SK-N-SH (cell line): ENCODE measurements at regions of chr4 and their contacts with region 1.

Region 1: GRCh38 chr4:139099366-139099982 is 77.5 kb downstream of the ELF2 start:
- DNase-seq: peak; percentile 76
- H3K4me3 ChIP-seq: no peak overlapping the region; a peak in 1 of 4 replicates
- H3K27ac ChIP-seq: no peak overlapping the region
- H3K4me1 ChIP-seq: peaks cover 0 to 2% of the 10 kb centered on the region in 2 experiments; a peak in 1 of 4 replicates
- H3K27me3 ChIP-seq: no peaks in the 10 kb centered on the region
- CTCF ChIP-seq: peak; percentile 89
- EP300 ChIP-seq: no peak
- RAD21 ChIP-seq: peak; percentile 93

Region 2: GRCh38 chr4:138475116-138475515 is 624.4 kb before region 1 on chr4:
- CTCF ChIA-PET with region 1: no interaction called
- POLR2A ChIA-PET with region 1: no interaction called
- DNase-seq: no peak
- H3K4me3 ChIP-seq: no peak overlapping the region
- H3K27ac ChIP-seq: no peak overlapping the region
- H3K4me1 ChIP-seq: no peaks in the 10 kb centered on the region
- H3K27me3 ChIP-seq: no peaks in the 10 kb centered on the region
- CTCF ChIP-seq: no peak
- EP300 ChIP-seq: no peak
- RAD21 ChIP-seq: no peak

Region 3: DNA sequence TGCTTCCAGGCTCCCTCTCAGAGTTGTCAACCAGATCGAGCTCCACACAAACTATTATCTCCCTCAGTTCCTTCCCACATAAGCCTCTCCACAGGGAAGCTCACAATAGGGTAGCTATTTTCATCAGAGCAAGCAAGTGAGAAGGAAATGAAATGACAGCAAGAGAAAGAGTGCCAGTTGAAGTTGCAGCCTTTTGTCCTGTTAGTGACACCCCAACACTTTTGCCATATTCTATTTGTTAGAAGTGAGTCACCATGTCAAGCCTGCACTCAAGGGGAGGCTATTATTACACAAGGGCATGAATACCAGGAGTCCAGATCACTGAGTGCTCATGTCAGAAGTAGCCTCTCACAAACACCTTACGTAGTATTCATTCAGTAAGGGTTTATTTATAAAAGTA is 350.2 kb before region 1 on chr4:
- CTCF ChIA-PET with region 1: no interaction called
- POLR2A ChIA-PET with region 1: no interaction called
- DNase-seq: no peak
- H3K4me3 ChIP-seq: no peak overlapping the region
- H3K27ac ChIP-seq: no peak overlapping the region
- H3K4me1 ChIP-seq: no peaks in the 10 kb centered on the region
- H3K27me3 ChIP-seq: no peaks in the 10 kb centered on the region
- CTCF ChIP-seq: no peak
- EP300 ChIP-seq: no peak
- RAD21 ChIP-seq: no peak

Region 4: GRCh38 chr4:139015269-139015947 is 84.1 kb before region 1 on chr4 and contains the start of gene NOCT:
- CTCF ChIA-PET with region 1: no interaction called
- POLR2A ChIA-PET with region 1: no interaction called
- DNase-seq: peak; percentile 91
- H3K4me3 ChIP-seq: peak within 1 kb of the TSS; percentile 73 to 85
- H3K27ac ChIP-seq: peak within 1 kb of the TSS; percentile 90 to 99
- H3K4me1 ChIP-seq: peaks cover 30 to 33% of the 10 kb centered on the region in 2 experiments
- H3K27me3 ChIP-seq: no peaks in the 10 kb centered on the region
- CTCF ChIP-seq: no peak
- EP300 ChIP-seq: peak in 1 of 2 experiments; percentile 60; a peak in 2 of 4 replicates
- RAD21 ChIP-seq: no peak
- polyA plus RNA-seq, gene NOCT: 3.8 TPM in 2 replicates

Region 5: DNA sequence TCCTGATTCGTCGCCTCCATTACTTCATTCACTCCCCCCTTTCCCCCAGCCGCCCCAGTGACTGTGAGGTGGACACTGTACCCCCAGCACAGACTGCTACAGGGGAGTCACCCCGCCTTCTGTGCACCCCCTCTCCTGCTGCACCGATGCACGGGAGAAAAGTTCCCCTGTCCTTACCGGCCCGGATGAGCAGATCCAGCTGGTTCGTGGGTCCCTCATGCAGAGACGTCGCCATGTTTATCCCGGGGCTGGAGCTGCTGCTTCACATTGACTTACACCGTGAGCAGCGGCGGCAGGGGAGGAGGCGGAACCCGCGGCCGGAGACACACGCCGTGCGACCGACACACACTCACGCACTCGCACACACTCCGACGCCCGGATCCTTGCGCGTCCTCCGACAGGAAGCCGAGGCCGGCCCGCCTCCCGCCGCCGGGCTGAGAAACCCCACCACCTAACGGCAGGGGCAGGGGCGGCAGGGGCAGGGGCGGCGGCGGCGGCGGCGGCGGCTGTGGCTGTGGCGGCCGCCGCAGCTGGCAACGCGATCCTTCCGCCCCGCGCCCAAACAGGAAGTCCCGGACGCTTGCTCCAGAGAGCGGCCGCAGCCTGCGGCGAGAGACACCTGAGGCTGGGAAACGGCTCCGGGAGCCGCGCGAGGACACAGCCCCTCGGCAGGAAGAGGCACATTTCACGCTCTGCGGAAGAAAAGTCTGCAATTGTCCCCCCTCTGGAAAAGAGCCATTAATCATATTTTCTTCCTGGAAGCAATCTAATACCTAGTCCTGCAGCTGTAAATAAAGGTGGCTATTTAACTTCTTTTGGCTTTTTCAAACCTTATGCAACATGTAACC is 15.3 kb before region 1 on chr4:
- CTCF ChIA-PET with region 1: interaction called, 17 read pairs
- POLR2A ChIA-PET with region 1: no interaction called
- DNase-seq: peak; percentile 91
- H3K4me3 ChIP-seq: peak overlapping the region; percentile 68 to 84
- H3K27ac ChIP-seq: peak overlapping the region; percentile 97 to 98
- H3K4me1 ChIP-seq: peaks cover 9 to 10% of the 10 kb centered on the region in 2 experiments; a peak in 2 of 4 replicates
- H3K27me3 ChIP-seq: no peaks in the 10 kb centered on the region
- CTCF ChIP-seq: peak; percentile 39; the same call in 1 of the 2 replicates
- EP300 ChIP-seq: no peak; a peak in 1 of 4 replicates
- RAD21 ChIP-seq: no peak

Region 6: DNA sequence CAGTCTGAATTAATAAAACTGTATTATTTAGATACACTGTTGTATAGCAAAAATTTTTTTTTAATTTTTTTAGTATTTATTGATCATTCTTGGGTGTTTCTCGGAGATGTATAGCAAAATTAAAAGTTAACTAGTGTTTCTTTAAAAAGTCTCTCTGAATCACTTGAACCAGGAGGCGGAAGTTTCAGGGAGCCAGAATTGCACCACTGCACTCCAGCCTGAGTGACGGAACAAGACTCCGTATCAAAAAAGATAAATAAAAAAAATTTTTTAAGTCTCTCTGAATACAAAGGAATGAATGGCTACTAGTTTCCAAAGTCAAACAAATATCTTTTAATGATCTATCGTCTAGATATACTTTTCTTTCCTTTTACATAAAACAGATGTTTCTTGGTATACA is 13.2 kb after region 1 on chr4:
- CTCF ChIA-PET with region 1: interaction called, 22 read pairs
- POLR2A ChIA-PET with region 1: no interaction called
- DNase-seq: no peak
- H3K4me3 ChIP-seq: no peak overlapping the region
- H3K27ac ChIP-seq: no peak overlapping the region
- H3K4me1 ChIP-seq: peaks cover 0 to 2% of the 10 kb centered on the region in 2 experiments; a peak in 1 of 4 replicates
- H3K27me3 ChIP-seq: no peaks in the 10 kb centered on the region
- CTCF ChIP-seq: no peak
- EP300 ChIP-seq: no peak
- RAD21 ChIP-seq: no peak

Region 7: DNA sequence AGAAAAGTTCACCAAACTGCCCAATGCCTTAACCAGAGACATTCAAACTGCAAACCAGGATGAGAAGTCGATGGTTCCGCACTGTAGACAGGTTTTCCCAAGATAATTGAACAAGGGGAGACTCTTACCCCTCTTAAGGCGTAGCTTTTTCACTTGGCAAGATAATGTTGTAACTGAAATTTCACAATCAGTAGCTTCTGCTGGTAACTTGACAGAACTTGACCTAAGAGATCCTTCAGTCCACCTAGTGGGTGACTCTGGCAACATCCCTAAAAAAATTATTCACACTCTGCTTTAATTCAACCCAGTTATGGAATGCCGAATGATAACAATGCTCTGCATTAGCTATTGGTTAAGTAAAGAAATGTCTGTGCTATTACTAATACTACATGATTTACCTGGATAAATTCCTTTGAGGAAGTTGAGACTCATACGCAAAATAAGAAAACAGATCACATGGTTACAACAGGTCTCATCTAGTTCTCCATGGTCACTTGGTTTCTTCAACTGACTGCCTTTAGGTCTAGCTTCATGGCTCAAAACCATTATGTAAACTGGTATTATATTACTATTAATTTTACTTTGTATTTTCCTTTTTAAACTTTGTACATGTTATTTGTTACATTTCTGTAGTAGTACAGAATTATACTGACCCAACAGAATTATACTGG is 68.4 kb after region 1 on chr4:
- CTCF ChIA-PET with region 1: interaction called, 14 read pairs
- POLR2A ChIA-PET with region 1: no interaction called
- DNase-seq: peak; percentile 48
- H3K4me3 ChIP-seq: no peak overlapping the region
- H3K27ac ChIP-seq: no peak overlapping the region
- H3K4me1 ChIP-seq: peaks cover 0 to 6% of the 10 kb centered on the region in 2 experiments; a peak in 1 of 4 replicates
- H3K27me3 ChIP-seq: no peaks in the 10 kb centered on the region
- CTCF ChIP-seq: peak; percentile 67
- EP300 ChIP-seq: no peak
- RAD21 ChIP-seq: peak; percentile 68

Region 8: GRCh38 chr4:139177868-139178611 is 78.6 kb after region 1 on chr4:
- CTCF ChIA-PET with region 1: interaction called, 19 read pairs
- POLR2A ChIA-PET with region 1: interaction called, 4 read pairs
- DNase-seq: peak; percentile 96
- H3K4me3 ChIP-seq: peak overlapping the region; percentile 94 to 98
- H3K27ac ChIP-seq: peak overlapping the region; percentile 85 to 97
- H3K4me1 ChIP-seq: peaks cover 3 to 11% of the 10 kb centered on the region in 2 experiments; a peak in 3 of 4 replicates
- H3K27me3 ChIP-seq: no peaks in the 10 kb centered on the region
- CTCF ChIP-seq: no peak
- EP300 ChIP-seq: peak in 1 of 2 experiments; percentile 26; a peak in 1 of 4 replicates
- RAD21 ChIP-seq: no peak

Region 9: GRCh38 chr4:139301113-139301820 is 201.8 kb after region 1 on chr4 and contains the start of gene NAA15:
- CTCF ChIA-PET with region 1: interaction called, 23 read pairs
- POLR2A ChIA-PET with region 1: no interaction called
- DNase-seq: peak; percentile 97
- H3K4me3 ChIP-seq: peak within 1 kb of the TSS; percentile 91 to 97
- H3K27ac ChIP-seq: peak within 1 kb of the TSS; percentile 90 to 94
- H3K4me1 ChIP-seq: peaks cover 15 to 19% of the 10 kb centered on the region in 2 experiments; a peak in 3 of 4 replicates
- H3K27me3 ChIP-seq: no peaks in the 10 kb centered on the region
- CTCF ChIP-seq: no peak
- EP300 ChIP-seq: peak; percentile 38 to 47; a peak in 2 of 4 replicates
- RAD21 ChIP-seq: 0 out of 2 replicates have a peak, but pooled peaks have one; percentile 8
- polyA plus RNA-seq, gene NAA15: 7.1 and 7.8 TPM in 2 replicates